SK-N-SH (cell line): ENCODE measurements at regions of chr14 and their contacts with region 1.

Region 1: DNA sequence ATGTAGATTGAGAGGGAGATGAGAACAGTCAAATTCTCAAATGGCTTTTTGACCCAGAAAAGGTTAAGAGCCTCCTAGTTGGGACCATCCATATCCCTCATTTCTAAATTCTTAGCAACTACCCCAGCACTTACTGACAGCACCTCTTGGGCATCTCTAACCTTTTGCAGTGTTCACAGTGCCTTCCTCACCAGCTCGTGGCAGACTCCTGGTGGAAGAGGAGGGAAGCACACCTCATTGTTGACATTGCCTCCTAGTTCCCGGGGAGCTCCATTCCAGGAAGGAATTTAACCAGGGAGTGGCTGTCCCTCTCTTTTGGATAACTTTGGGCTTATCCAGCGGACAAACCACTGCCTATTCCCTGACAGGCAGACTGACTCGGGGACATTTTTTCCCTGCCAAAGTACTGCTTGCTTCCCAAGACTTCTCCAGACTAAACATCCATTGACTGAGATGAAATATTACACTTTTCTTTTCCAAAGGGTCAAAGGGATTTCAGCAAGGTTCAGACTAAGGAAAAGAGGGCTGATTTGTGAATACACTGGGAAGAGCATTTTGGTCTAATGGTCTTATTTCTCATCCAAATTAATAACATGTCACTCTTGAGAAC is 9.0 kb upstream of the OR6J1 start:
- DNase-seq: peak; percentile 67
- H3K4me3 ChIP-seq: no peak overlapping the region; a peak in 1 of 4 replicates
- H3K27ac ChIP-seq: no peak overlapping the region
- H3K4me1 ChIP-seq: no peaks in the 10 kb centered on the region
- H3K27me3 ChIP-seq: peaks cover 21% of the 10 kb centered on the region; the same call in 1 of the 2 replicates
- CTCF ChIP-seq: peak; percentile 71
- EP300 ChIP-seq: no peak
- RAD21 ChIP-seq: peak; percentile 81

Region 2: GRCh38 chr14:22579236-22579635 is 73.9 kb before region 1 on chr14:
- CTCF ChIA-PET with region 1: interaction called, 10 read pairs
- POLR2A ChIA-PET with region 1: no interaction called
- DNase-seq: no peak
- H3K4me3 ChIP-seq: no peak overlapping the region
- H3K27ac ChIP-seq: no peak overlapping the region
- H3K4me1 ChIP-seq: no peaks in the 10 kb centered on the region; a peak in 1 of 4 replicates
- H3K27me3 ChIP-seq: no peaks in the 10 kb centered on the region
- CTCF ChIP-seq: no peak
- EP300 ChIP-seq: no peak
- RAD21 ChIP-seq: no peak

Region 3: GRCh38 chr14:22589096-22589839 is 63.8 kb before region 1 on chr14 and contains the start of gene DAD1:
- CTCF ChIA-PET with region 1: interaction called, 15 read pairs
- POLR2A ChIA-PET with region 1: no interaction called
- DNase-seq: peak; percentile 97
- H3K4me3 ChIP-seq: peak within 1 kb of the TSS; percentile 92 to 99
- H3K27ac ChIP-seq: peak within 1 kb of the TSS; percentile 82 to 93
- H3K4me1 ChIP-seq: peaks cover 9 to 12% of the 10 kb centered on the region in 2 experiments; a peak in 2 of 4 replicates
- H3K27me3 ChIP-seq: peaks cover 14% of the 10 kb centered on the region; the same call in 1 of the 2 replicates
- CTCF ChIP-seq: no peak
- EP300 ChIP-seq: no peak
- RAD21 ChIP-seq: no peak
- polyA plus RNA-seq, gene DAD1: 406 and 478 TPM in 2 replicates